ENCODE measurements at regions of chr15 and their contacts with region 1.

Region 1: GRCh38 chr15:58227706-58228543 is 89.7 kb downstream of the AQP9 start:
- DNase-seq: peak; percentile 42
- ATAC-seq: no peak
- H3K4me3 ChIP-seq: no peak overlapping the region
- H3K4me3 Mint-ChIP-seq: no peak overlapping the region
- H3K27ac ChIP-seq: no peak overlapping the region
- H3K27ac Mint-ChIP-seq: no peak overlapping the region
- H3K4me1 ChIP-seq: no peaks in the 10 kb centered on the region
- H3K4me1 Mint-ChIP-seq: no peaks in the 10 kb centered on the region
- H3K27me3 ChIP-seq: no peaks in the 10 kb centered on the region
- H3K27me3 Mint-ChIP-seq: peaks cover 34% of the 10 kb centered on the region
- CTCF ChIP-seq: peak; percentile 58

Region 2: DNA sequence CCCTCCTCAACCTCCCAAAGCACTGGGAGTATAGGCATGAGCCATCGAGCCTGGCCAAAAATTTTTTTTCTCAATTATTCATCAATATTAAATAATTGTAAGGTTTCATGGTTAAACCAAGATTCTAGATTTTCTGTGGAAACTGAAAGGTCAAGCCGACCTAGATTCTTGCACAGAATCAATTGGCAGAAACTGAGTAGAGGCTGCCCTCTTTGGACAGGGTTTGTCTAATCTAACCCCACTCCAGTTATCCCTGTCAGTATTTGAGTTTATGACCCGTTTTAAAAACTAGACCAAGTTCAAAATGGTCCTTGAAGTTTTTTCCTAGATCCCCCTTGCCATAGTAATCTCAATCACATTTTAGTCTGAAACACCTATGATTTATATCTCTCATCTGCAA is 530.2 kb after region 1 on chr15:
- CTCF ChIA-PET with region 1: interaction called, 3 read pairs
- POLR2A ChIA-PET with region 1: no interaction called
- intact Hi-C with region 1: loop called (anchors 5 kb)
- DNase-seq: no peak
- ATAC-seq: no peak
- H3K4me3 ChIP-seq: no peak overlapping the region
- H3K4me3 Mint-ChIP-seq: no peak overlapping the region
- H3K27ac ChIP-seq: no peak overlapping the region
- H3K27ac Mint-ChIP-seq: no peak overlapping the region
- H3K4me1 ChIP-seq: no peaks in the 10 kb centered on the region
- H3K4me1 Mint-ChIP-seq: no peaks in the 10 kb centered on the region
- H3K27me3 ChIP-seq: no peaks in the 10 kb centered on the region
- H3K27me3 Mint-ChIP-seq: peaks cover 8% of the 10 kb centered on the region
- CTCF ChIP-seq: no peak